ENCODE measurements at regions of chr16 and their contacts with region 1.

Region 1: DNA sequence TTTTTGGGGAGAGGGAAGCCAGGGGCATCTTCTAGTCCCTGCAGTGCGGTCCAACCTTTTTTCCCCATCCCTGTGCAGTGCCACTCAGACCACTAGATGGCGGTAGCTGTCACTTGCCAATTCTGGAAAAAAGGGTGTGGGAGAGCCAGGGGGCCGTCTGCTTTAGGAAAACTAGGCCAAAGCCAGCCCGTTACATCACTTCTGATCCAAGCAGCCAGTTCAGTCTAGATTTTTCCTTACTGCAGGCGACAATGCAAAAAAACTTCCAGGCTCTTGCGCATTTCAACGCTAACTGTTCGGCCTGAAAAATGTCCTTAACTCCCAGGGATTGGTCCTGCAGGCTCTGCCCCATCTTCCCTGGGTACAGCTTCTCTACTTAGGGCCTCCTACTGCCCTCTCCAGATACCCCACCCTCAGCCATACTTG is 69.2 kb upstream of the CES5A start:
- DNase-seq: peak; percentile 54
- H3K4me3 ChIP-seq: no peak overlapping the region
- H3K27ac ChIP-seq: no peak overlapping the region
- H3K4me1 ChIP-seq: no peaks in the 10 kb centered on the region
- H3K27me3 ChIP-seq: no peaks in the 10 kb centered on the region
- CTCF ChIP-seq: peak; percentile 92

Region 2: GRCh38 chr16:55494994-55495421 is 449.4 kb before region 1 on chr16:
- intact Hi-C with region 1: no loop called
- DNase-seq: peak; percentile 61
- H3K4me3 ChIP-seq: no peak overlapping the region
- H3K27ac ChIP-seq: no peak overlapping the region
- H3K4me1 ChIP-seq: no peaks in the 10 kb centered on the region
- H3K27me3 ChIP-seq: no peaks in the 10 kb centered on the region
- CTCF ChIP-seq: no peak

Region 3: DNA sequence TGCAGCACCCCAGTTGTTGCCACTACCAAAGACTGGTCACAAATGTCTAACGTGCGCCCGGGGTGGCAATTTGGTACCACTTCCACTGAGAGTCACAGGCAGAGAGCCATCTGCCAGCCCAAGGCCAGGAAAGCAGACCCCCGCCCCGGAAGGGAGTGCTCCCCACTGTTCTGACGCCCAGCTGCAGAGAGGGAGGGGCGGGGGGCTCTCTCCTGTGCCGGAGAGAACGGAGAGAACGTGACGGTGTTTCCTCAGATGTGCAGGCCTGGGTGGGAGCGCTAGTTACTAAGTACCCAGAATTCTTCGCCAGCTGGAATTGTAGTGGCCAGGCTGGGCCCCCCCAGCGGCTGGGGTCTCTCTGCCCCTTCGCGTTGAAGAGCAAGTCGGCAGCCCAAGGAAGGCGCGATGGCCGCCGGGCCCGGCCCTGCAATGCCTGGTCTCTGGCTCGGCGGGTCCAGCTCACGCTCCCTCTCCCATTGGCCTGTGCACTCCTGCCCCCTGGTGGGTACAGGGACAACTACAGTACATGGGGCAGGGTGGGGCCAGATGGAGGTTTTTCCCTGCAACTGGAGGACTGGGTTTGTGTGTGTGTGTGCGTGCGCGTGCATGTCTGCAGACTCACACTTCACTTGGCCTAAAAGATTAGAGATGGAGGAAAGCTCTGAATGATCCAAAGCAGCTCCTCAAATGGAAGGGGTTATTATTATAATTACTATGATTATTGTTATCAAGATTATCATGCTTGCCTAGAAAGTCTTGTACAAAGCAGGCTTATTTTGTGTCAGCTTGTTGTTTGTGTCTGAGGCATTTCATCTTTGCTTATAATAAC is 373.8 kb after region 1 on chr16:
- intact Hi-C with region 1: loop called (anchors 5 kb)
- DNase-seq: peak; percentile 70
- H3K4me3 ChIP-seq: peak overlapping the region; percentile 1
- H3K27ac ChIP-seq: no peak overlapping the region
- H3K4me1 ChIP-seq: no peaks in the 10 kb centered on the region
- H3K27me3 ChIP-seq: no peaks in the 10 kb centered on the region
- CTCF ChIP-seq: peak; percentile 94

Measured in colonic mucosa (tissue), 4 donors.